PC-3 (cell line): ENCODE measurements at regions of chr2 and their contacts with region 1.

Region 1: DNA sequence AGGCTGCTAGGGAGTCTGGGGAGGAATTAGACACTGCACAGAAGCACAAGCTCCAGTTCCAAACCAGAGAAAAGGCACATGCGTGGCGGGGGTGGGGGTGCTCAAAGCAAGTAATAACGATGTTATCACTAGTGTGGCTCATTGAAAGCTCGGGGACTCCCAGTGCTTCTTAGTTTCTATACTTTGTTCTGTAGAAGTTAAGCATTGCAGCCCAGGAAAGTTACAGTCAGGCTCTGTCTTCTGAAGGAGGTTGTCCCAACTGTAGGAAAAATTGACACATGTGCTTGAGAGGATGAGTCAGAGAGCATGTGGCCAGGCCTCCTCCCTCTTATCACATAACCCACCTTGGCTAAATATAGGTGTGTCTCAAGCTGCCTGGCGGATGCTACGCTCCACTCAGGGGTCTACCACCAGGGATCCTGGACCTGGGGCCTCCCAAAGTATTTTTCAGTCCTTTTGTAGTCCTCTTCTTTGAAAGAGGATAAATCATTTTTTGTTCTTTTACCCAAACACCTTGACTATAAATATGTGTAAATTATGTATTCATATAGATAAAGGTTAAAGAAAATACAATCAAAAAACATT is 3.8 kb downstream of the GALNT5 start:
- DNase-seq: peak; percentile 86
- ATAC-seq: peak; percentile 92
- H3K4me3 ChIP-seq: peak overlapping the region; percentile 8; the same call in 1 of the 2 replicates
- H3K27ac ChIP-seq: peak overlapping the region; percentile 97
- H3K4me1 ChIP-seq: peaks cover 23% of the 10 kb centered on the region
- H3K27me3 ChIP-seq: no peaks in the 10 kb centered on the region
- CTCF ChIP-seq: no peak

Region 2: GRCh38 chr2:157245846-157246764 is 15.2 kb before region 1 on chr2:
- CTCF ChIA-PET with region 1: interaction called, 3 read pairs
- POLR2A ChIA-PET with region 1: interaction called, 14 read pairs
- intact Hi-C with region 1: loop called (anchors 1 kb)
- DNase-seq: peak; percentile 91
- ATAC-seq: peak; percentile 94
- H3K4me3 ChIP-seq: peak overlapping the region; percentile 20; the same call in 1 of the 2 replicates
- H3K27ac ChIP-seq: peak overlapping the region; percentile 98
- H3K4me1 ChIP-seq: peaks cover 23% of the 10 kb centered on the region
- H3K27me3 ChIP-seq: no peaks in the 10 kb centered on the region
- CTCF ChIP-seq: no peak

Region 3: DNA sequence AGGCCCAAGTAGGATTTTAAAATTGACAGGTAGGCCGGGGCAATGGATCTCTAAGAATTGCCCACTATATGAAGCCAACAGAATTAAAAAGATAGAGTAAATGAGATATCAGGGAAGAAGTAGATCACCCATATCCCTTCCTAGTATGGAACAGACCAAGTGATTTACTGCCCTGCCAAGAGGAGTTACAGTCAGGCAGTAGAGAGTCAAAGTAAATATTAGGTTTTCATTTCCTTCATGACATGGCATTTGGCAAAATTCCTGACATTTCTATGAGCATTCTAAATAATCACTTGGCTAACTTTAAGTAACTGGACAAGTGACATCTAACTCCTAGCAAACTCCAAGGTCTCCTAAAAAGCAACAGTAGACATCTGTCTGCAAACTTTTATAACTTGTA is 29.7 kb after region 1 on chr2:
- CTCF ChIA-PET with region 1: no interaction called
- POLR2A ChIA-PET with region 1: interaction called, 7 read pairs
- intact Hi-C with region 1: loop called (anchors 2 kb)
- DNase-seq: peak; percentile 93
- ATAC-seq: peak; percentile 100
- H3K4me3 ChIP-seq: no peak overlapping the region
- H3K27ac ChIP-seq: peak overlapping the region; percentile 56
- H3K4me1 ChIP-seq: peaks cover 15% of the 10 kb centered on the region
- H3K27me3 ChIP-seq: no peaks in the 10 kb centered on the region
- CTCF ChIP-seq: no peak

Region 4: DNA sequence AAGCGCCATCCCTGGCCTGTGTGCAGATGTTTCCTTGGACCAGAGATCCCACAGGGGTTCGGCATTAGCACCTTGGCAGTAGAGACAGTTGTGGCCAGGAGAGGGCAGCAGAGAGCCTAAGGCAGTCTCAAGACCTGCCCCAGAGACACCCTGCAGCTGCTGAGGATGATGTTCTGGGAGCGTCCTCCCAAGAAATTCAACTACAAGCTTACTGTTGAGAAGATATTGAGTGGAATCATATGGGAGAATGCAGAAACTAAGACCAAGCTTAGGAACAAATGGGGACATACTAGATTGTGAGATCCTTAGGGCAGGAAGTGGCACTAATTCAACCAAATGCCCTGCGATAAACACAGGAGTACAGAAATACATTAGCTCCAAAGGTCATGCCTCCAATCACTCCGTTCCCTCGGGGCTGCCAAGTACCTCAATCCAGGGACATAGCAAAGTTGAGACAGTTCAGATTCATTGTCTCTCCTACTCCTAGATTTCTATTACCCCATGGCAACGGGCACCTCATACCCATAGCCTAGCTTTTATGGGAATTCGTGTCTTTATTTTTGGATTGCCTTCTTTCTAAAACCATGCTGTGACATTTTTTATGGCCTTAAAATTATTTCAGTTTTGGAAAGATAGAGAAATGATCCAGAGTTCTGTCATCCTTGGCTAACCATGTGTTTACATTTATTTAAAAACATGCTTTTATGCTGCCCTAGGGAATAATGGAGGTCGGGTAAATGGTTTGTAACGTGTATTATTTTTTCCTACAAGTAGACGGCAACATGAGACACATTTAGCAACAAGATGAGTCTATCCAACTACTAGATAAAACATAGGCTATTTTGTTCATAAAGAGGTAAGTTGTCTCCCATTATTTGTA is 66.6 kb after region 1 on chr2:
- CTCF ChIA-PET with region 1: interaction called, 10 read pairs
- POLR2A ChIA-PET with region 1: no interaction called
- intact Hi-C with region 1: no loop called
- DNase-seq: peak; percentile 83
- ATAC-seq: peak; percentile 89
- H3K4me3 ChIP-seq: no peak overlapping the region
- H3K27ac ChIP-seq: no peak overlapping the region
- H3K4me1 ChIP-seq: peaks cover 13% of the 10 kb centered on the region
- H3K27me3 ChIP-seq: no peaks in the 10 kb centered on the region
- CTCF ChIP-seq: peak; percentile 91